Activated CD4-positive, alpha-beta T cell treated with anti-CD3 and anti-CD28 coated beads, Interleukin-2, amount 10 ng/mL, durations not matched to agents 7 days and 5 days (primary cell): ENCODE measurements at regions of chr6 and their contacts with region 1.

Region 1: DNA sequence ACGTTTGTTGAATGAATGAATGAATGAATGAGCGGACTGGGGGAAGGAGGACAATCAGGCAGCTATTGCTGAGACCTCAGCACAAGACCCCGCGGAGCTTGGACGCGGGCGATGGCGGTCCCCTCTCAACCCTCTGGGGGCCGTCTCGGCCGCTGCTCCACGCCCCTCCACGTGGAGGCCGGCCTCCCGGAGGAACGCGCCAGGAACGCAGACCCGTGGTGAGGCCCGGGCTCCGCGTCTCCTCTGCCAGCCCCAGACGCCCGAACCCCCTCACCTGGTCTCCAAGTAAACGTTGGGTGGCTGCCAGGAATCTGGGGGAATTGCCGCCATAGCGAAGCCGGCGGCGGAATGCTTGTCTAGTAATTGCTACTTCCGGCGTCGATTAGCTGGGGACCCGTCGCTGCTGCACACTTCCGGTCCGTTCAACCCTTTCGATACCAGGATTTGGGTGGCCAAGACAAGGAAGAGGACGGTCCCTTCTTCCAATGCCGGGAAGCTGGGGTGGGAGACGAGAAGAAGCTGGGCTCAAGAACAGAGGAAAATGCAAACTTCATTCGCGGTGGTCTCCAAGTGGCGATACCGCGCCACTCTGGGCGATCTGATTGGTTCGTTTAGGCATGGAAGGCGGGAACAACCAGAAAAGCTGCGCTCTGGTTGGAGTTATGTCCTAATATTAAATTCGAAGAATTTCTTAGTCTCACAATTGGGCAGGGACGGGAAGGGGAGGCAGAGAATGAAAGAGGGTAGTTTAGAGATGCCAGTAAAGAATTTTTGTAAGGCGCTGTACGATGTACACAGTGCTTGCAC is at the start of gene PPIL1:
- DNase-seq: peak; percentile 86
- H3K4me3 Mint-ChIP-seq: peak within 1 kb of the TSS; percentile 88
- H3K27ac Mint-ChIP-seq: peak within 1 kb of the TSS; percentile 97
- H3K4me1 Mint-ChIP-seq: peaks cover 59% of the 10 kb centered on the region
- H3K27me3 Mint-ChIP-seq: peaks cover 10% of the 10 kb centered on the region
- total RNA-seq, gene PPIL1: 27.0 to 29.3 TPM

Region 2: GRCh38 chr6:36765594-36766398 is 108.8 kb before region 1 on chr6:
- CTCF ChIA-PET with region 1: interaction called, 11 read pairs
- POLR2A ChIA-PET with region 1: no interaction called
- DNase-seq: peak; percentile 89
- H3K4me3 Mint-ChIP-seq: no peak overlapping the region
- H3K27ac Mint-ChIP-seq: no peak overlapping the region
- H3K4me1 Mint-ChIP-seq: peaks cover 42% of the 10 kb centered on the region
- H3K27me3 Mint-ChIP-seq: no peaks in the 10 kb centered on the region

Region 3: GRCh38 chr6:36851149-36851614 is 23.5 kb before region 1 on chr6:
- CTCF ChIA-PET with region 1: interaction called, 16 read pairs
- POLR2A ChIA-PET with region 1: no interaction called
- DNase-seq: peak; percentile 70
- H3K4me3 Mint-ChIP-seq: no peak overlapping the region
- H3K27ac Mint-ChIP-seq: no peak overlapping the region
- H3K4me1 Mint-ChIP-seq: peaks cover 4% of the 10 kb centered on the region
- H3K27me3 Mint-ChIP-seq: no peaks in the 10 kb centered on the region

Region 4: GRCh38 chr6:36862164-36862847 is 12.3 kb before region 1 on chr6:
- CTCF ChIA-PET with region 1: interaction called, 31 read pairs
- POLR2A ChIA-PET with region 1: interaction called, 3 read pairs
- DNase-seq: no peak
- H3K4me3 Mint-ChIP-seq: no peak overlapping the region
- H3K27ac Mint-ChIP-seq: peak overlapping the region; percentile 4
- H3K4me1 Mint-ChIP-seq: peaks cover 39% of the 10 kb centered on the region
- H3K27me3 Mint-ChIP-seq: no peaks in the 10 kb centered on the region

Region 5: DNA sequence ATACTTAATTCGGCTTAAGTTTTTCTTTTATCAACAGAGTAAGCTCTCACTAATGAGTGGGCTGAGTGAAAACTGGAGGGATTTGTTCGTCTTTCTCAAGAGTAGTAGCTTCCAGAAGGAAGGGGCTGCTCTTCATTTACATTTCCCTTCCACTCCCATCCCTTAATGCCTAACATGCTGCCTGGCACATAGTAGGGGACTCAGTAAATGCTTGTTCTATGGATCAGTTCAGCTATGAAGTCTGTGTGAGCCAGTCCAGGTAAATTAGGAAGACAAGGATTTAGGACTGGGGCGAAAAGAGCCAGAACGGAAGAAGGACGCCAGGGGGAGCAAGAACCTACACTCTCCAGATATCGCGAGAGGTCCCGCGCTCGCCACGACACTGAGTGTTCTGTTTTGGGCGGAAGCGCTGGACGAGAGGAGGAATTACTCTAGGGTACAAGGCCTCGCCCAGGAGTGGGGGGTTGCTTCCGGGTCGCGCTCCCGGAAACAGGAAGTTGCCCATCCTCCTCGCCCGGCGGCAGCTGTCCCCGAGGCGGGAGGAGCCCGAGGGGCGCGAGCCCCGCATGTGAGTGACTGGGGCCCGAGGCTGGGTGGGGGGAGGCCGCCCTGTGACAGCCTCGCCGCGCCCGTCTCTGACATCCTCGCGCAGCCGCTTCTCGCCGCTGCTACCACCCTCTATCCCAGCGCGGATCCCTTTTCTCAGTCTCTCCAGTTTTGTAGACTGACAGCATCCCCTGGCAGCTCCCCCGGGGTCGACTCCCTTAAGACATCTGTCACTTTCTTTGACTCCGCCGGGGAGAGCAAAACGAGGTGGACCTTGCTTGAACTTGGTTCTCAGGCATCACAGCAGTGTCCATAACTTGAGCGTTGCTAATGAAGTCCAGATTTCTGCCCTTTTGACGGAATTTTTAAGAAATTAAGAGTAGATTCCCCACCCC is 11.1 kb after region 1 on chr6 and contains the start of gene C6orf89:
- CTCF ChIA-PET with region 1: interaction called, 77 read pairs
- POLR2A ChIA-PET with region 1: no interaction called
- DNase-seq: peak; percentile 99
- H3K4me3 Mint-ChIP-seq: peak within 1 kb of the TSS; percentile 90
- H3K27ac Mint-ChIP-seq: peak within 1 kb of the TSS; percentile 94
- H3K4me1 Mint-ChIP-seq: peaks cover 38% of the 10 kb centered on the region
- H3K27me3 Mint-ChIP-seq: no peaks in the 10 kb centered on the region
- total RNA-seq, gene C6orf89: 47.5 to 58.1 TPM

Region 6: GRCh38 chr6:37376078-37376743 is 501.6 kb after region 1 on chr6:
- CTCF ChIA-PET with region 1: no interaction called
- POLR2A ChIA-PET with region 1: interaction called, 11 read pairs
- DNase-seq: no peak
- H3K4me3 Mint-ChIP-seq: no peak overlapping the region
- H3K27ac Mint-ChIP-seq: no peak overlapping the region
- H3K4me1 Mint-ChIP-seq: no peaks in the 10 kb centered on the region
- H3K27me3 Mint-ChIP-seq: no peaks in the 10 kb centered on the region